Mammary epithelial cell (primary cell): ENCODE measurements at regions of chr13 and their contacts with region 1.

Region 1: DNA sequence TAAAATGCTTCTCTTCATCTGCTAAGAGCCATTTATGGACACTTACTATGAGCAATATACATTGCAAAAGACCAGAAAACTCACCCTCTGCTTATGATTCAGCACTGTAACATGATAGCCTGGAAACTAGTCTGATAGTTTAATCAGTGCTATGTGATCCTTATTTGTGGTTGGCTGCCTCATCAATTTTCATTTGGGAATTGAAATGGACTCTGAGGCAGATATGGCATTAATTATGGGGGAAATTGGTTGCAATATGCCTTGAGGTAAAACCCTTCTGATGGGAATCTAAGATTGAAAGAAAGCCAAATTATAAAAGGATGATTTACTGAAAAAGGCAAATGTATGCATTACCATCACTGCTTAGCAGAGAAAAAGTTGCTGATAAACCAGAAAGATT is 33.5 kb downstream of the FAM216B start:
- DNase-seq: peak; percentile 70
- H3K4me3 ChIP-seq: no peak overlapping the region
- H3K27ac ChIP-seq: no peak overlapping the region
- H3K4me1 ChIP-seq: peaks cover 10% of the 10 kb centered on the region
- H3K27me3 ChIP-seq: no peaks in the 10 kb centered on the region
- CTCF ChIP-seq: no peak

Region 2: DNA sequence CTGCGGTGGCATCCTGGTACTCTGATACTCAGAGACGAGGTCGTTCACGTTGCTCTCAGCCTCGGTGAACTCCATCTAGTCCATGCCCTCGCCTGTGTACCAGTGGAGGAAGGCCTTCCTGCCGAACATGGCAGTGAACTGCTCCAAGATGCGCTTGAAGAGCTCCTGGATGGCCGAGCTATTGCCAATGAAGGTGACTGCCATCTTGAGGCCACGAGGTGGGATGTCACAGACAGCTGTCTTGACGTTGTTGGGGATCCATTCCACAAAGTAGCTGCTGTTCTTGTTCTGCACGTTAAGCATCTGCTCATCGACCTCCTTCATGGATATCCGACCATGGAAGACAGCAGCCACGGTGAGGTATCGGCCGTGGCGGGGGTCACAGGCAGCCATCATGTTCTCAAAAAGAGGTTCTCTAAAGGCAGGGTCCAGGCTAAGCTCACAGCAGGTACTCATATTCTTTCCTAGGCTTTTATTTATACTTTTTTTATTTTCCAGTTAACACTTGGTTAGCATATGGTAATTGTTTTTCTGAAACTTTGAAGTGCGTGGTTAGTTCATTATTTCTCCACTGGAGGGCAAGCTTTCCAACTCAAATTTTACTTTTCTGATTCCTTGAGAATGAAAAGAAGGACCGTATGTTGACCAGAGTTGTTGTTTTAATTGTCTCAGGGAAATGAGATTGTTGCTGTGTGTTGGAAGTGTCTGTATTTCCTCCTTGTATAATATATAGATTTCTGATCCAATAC is 1429.9 kb before region 1 on chr13:
- CTCF ChIA-PET with region 1: interaction called, 11 read pairs
- dilution Hi-C with region 1: no loop called
- in situ Hi-C with region 1: no loop called
- intact Hi-C with region 1: no loop called
- DNase-seq: no peak
- H3K4me3 ChIP-seq: no peak overlapping the region
- H3K27ac ChIP-seq: no peak overlapping the region
- H3K4me1 ChIP-seq: no peaks in the 10 kb centered on the region
- H3K27me3 ChIP-seq: no peaks in the 10 kb centered on the region
- CTCF ChIP-seq: peak; percentile 35 to 43

Region 3: GRCh38 chr13:42660333-42660965 is 154.4 kb before region 1 on chr13:
- CTCF ChIA-PET with region 1: no interaction called
- dilution Hi-C with region 1: no loop called
- in situ Hi-C with region 1: no loop called
- intact Hi-C with region 1: loop called (anchors 5 kb)
- DNase-seq: peak; percentile 6
- H3K4me3 ChIP-seq: no peak overlapping the region
- H3K27ac ChIP-seq: no peak overlapping the region
- H3K4me1 ChIP-seq: no peaks in the 10 kb centered on the region
- H3K27me3 ChIP-seq: peaks cover 2% of the 10 kb centered on the region
- CTCF ChIP-seq: peak; percentile 32 to 49

Region 4: DNA sequence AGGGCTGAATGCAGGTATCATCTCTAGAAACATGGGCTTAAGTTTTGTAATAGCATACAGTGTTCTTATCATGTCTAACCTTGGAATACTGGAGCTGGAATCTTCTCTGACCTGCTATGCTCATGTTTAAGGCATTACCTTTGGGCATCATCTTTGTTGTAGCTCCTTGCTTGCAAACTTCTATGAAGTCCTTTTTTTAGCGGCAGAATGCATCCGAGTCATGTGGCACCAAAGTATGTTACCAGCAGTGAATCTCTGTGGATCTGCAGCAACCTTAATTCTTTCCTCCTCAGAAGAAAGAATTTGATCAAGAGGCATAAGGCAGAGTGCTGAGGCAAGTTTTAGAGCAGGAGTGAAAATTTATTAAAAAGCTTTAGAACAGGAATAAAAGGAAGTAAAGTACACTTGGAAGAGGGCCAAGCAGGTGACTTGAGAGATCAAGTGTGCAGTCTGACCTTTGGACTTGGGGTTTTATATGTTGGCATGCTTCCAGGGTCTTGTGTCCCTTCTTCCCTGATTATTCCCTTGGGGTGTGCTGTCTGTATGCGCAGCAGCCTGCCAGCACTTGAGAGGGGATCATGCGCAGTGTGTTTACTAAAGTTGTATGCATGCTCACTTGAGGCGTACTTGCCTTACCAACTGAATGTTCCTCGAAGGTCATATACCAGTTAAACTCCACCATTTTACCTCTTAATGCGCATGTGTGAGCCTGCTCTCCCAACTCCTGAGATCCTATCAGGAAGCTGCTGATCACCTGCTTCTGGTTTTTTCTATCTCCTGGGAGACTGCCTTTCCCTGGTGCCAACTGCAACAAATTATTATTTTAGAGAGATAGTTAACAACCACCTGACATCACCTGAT is 1180.4 kb after region 1 on chr13:
- CTCF ChIA-PET with region 1: interaction called, 12 read pairs
- dilution Hi-C with region 1: no loop called
- in situ Hi-C with region 1: no loop called
- intact Hi-C with region 1: no loop called
- DNase-seq: no peak
- H3K4me3 ChIP-seq: no peak overlapping the region
- H3K27ac ChIP-seq: no peak overlapping the region
- H3K4me1 ChIP-seq: no peaks in the 10 kb centered on the region
- H3K27me3 ChIP-seq: no peaks in the 10 kb centered on the region
- CTCF ChIP-seq: no peak